Thyroid gland (tissue), 4 donors: ENCODE measurements at regions of chr21 and their contacts with region 1.

Region 1: DNA sequence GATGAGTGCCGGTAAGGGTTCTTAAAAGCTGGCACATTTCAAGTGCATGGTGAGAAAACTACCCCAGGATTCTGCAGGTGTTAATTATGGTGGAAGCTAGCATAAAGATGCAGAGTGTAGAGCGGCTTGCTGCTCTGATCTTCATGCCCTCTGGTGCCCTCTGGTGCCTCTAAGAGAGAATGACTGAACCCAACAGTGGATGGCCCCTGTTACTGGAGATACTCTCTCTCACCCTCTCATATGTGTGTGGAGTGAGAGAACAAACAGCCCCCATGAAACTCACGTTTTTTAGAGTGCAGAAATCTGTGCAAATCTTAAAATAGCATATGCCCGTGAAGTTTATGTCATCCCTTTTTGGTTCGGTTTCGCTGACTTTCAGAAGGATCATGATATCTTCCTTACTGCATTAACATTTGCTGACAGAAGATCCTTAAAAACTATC is 90.0 kb downstream of the GRIK1 start:
- DNase-seq: peak; percentile 14 to 27
- H3K4me3 ChIP-seq: no peak overlapping the region
- H3K27ac ChIP-seq: no peak overlapping the region
- H3K4me1 ChIP-seq: no peaks in the 10 kb centered on the region
- H3K27me3 ChIP-seq: no peaks in the 10 kb centered on the region
- CTCF ChIP-seq: peak in 4 of 6 experiments; percentile 9 to 63 (median 44)
- POLR2A ChIP-seq: no peak

Region 2: DNA sequence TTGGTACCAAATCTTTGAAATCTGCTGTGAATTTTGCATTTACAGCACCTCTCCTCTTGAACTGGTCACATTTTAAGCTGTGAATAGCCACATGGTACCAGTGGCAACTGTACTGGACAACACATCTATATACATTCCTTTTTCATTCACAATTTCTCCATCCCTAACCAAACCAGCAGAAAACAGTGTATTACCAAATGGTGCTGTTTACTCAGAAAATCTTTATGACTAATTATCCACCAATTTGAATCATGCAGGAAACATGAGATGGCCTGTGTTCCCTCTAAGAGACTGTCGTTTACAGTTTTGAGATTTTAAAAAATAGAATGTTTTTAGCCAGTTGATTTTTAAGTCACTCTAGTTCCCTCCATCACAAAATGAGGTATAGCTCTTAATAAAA is 758.7 kb before region 1 on chr21:
- intact Hi-C with region 1: loop called (anchors 10 kb)
- DNase-seq: no peak
- H3K4me3 ChIP-seq: no peak overlapping the region
- H3K27ac ChIP-seq: no peak overlapping the region
- H3K4me1 ChIP-seq: peaks cover 0 to 3% of the 10 kb centered on the region in 2 donors
- H3K27me3 ChIP-seq: no peaks in the 10 kb centered on the region
- CTCF ChIP-seq: no peak
- POLR2A ChIP-seq: no peak

Region 3: GRCh38 chr21:29571949-29572348 is 277.8 kb before region 1 on chr21:
- intact Hi-C with region 1: no loop called
- DNase-seq: no peak
- H3K4me3 ChIP-seq: no peak overlapping the region
- H3K27ac ChIP-seq: no peak overlapping the region
- H3K4me1 ChIP-seq: no peaks in the 10 kb centered on the region
- H3K27me3 ChIP-seq: no peaks in the 10 kb centered on the region
- CTCF ChIP-seq: no peak
- POLR2A ChIP-seq: no peak